ENCODE measurements at regions of chr4 and their contacts with region 1.

Region 1: GRCh38 chr4:124712372-124713184 is at the start of gene ANKRD50:
- H3K4me3 Mint-ChIP-seq: no peak within 1 kb of the TSS
- H3K27ac Mint-ChIP-seq: no peak within 1 kb of the TSS
- H3K4me1 Mint-ChIP-seq: peaks cover 19% of the 10 kb centered on the region
- H3K27me3 Mint-ChIP-seq: no peaks in the 10 kb centered on the region

Region 2: DNA sequence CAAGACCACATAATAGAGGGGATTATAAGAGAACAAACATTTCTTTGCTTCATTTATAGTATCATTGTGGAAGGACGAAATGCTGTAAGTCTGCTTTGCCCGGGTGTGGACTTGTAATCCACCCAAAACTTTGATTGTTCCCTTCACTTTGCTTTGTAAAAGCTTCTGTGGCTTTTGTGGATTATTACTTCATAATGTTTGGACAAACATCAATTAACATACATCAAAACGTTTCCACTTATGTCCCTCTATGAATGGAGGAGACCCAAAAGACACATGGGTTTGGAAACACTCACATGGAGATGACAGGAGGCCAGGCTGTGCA is 900.5 kb before region 1 on chr4:
- intact Hi-C with region 1: loop called (anchors 5 kb)
- H3K4me3 Mint-ChIP-seq: peak overlapping the region; percentile 74
- H3K27ac Mint-ChIP-seq: peak overlapping the region; percentile 78
- H3K4me1 Mint-ChIP-seq: peaks cover 19% of the 10 kb centered on the region
- H3K27me3 Mint-ChIP-seq: peaks cover 2% of the 10 kb centered on the region

Region 3: GRCh38 chr4:124684301-124684700 is 28.3 kb before region 1 on chr4:
- intact Hi-C with region 1: loop called (anchors 5 kb)
- H3K4me3 Mint-ChIP-seq: no peak overlapping the region
- H3K27ac Mint-ChIP-seq: no peak overlapping the region
- H3K4me1 Mint-ChIP-seq: peaks cover 24% of the 10 kb centered on the region
- H3K27me3 Mint-ChIP-seq: no peaks in the 10 kb centered on the region